HCT116 (cell line): ENCODE measurements at regions of chr15 and their contacts with region 1.

Region 1: GRCh38 chr15:85730001-85730820 is 64.5 kb downstream of the KLHL25 start:
- DNase-seq: peak; percentile 47
- ATAC-seq: peak; percentile 93
- H3K4me3 ChIP-seq: no peak overlapping the region
- H3K27ac ChIP-seq: no peak overlapping the region
- H3K4me1 ChIP-seq: no peaks in the 10 kb centered on the region
- H3K27me3 ChIP-seq: no peaks in the 10 kb centered on the region
- CTCF ChIP-seq: peak; percentile 61 to 81 (median 68)
- POLR2A ChIP-seq: no peak
- RAD21 ChIP-seq: peak; percentile 79

Region 2: GRCh38 chr15:85306946-85307708 is 423.1 kb before region 1 on chr15:
- CTCF ChIA-PET with region 1: no interaction called
- POLR2A ChIA-PET with region 1: no interaction called
- RAD21 ChIA-PET with region 1: no interaction called
- intact Hi-C with region 1: loop called (anchors 10 kb)
- DNase-seq: no peak
- ATAC-seq: no peak
- H3K4me3 ChIP-seq: no peak overlapping the region
- H3K27ac ChIP-seq: no peak overlapping the region
- H3K4me1 ChIP-seq: no peaks in the 10 kb centered on the region
- H3K27me3 ChIP-seq: no peaks in the 10 kb centered on the region
- CTCF ChIP-seq: no peak
- POLR2A ChIP-seq: no peak
- RAD21 ChIP-seq: no peak

Region 3: DNA sequence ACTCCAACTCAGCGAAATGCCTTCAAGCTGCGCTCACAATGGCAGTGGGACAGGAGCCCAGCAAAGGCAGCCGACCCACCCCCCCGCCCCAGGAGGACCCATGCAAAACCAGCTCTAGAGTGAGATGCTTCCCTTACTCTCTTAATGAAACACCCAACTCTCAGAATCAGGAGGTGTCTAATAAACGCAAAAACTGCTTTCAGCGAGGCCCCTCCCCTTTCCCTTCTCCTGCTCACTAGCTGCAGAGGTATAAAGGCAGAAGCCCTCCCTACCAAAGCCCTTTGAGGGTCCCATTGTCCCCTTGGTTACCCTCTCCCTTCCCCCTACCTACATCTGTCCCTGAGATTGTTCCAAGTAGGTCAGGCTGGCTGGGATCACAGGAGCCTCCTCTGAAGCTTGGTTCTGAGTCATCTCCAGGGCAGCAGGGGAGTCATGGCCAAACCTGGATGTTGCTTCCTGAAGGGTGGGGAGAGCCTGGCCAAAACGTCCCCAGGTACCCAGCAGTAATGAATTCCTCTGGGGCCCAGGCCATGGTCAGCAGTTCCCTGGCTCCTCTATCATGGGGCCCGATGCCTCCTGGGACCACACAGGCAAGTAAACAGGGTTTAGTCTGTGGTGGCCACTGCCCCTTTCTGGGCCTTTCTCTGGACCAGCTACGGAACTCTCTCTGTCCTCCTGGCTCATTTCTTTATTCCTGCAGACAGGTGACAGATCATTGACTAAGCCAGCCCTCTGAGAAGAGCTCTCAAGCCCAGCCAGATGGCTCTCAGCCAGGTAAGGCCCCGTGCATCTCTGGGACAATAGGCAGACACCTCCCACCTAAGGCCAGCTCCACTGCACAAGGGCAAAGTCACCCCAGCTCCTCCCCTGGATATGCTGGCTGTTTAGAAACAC is 55.9 kb after region 1 on chr15:
- CTCF ChIA-PET with region 1: no interaction called
- POLR2A ChIA-PET with region 1: no interaction called
- RAD21 ChIA-PET with region 1: no interaction called
- intact Hi-C with region 1: loop called (anchors 5 kb)
- DNase-seq: peak; percentile 53
- ATAC-seq: peak; percentile 92
- H3K4me3 ChIP-seq: peak overlapping the region; percentile 16 to 40
- H3K27ac ChIP-seq: peak overlapping the region; percentile 58
- H3K4me1 ChIP-seq: peaks cover 44 to 48% of the 10 kb centered on the region in 2 experiments
- H3K27me3 ChIP-seq: no peaks in the 10 kb centered on the region
- CTCF ChIP-seq: no peak
- POLR2A ChIP-seq: no peak
- RAD21 ChIP-seq: no peak

Region 4: GRCh38 chr15:85831415-85832113 is 101.4 kb after region 1 on chr15:
- CTCF ChIA-PET with region 1: interaction called, 4 read pairs
- POLR2A ChIA-PET with region 1: no interaction called
- RAD21 ChIA-PET with region 1: interaction called in 1 of 2 experiments, 3 read pairs
- intact Hi-C with region 1: loop called (anchors 1 kb)
- DNase-seq: peak; percentile 37
- ATAC-seq: peak; percentile 99
- H3K4me3 ChIP-seq: no peak overlapping the region
- H3K27ac ChIP-seq: no peak overlapping the region
- H3K4me1 ChIP-seq: no peaks in the 10 kb centered on the region
- H3K27me3 ChIP-seq: no peaks in the 10 kb centered on the region
- CTCF ChIP-seq: peak; percentile 70 to 87 (median 76)
- POLR2A ChIP-seq: no peak
- RAD21 ChIP-seq: peak; percentile 83

Region 5: GRCh38 chr15:85840065-85840801 is 110.0 kb after region 1 on chr15:
- CTCF ChIA-PET with region 1: interaction called, 14 read pairs
- POLR2A ChIA-PET with region 1: no interaction called
- RAD21 ChIA-PET with region 1: no interaction called
- intact Hi-C with region 1: loop called (anchors 1 kb)
- DNase-seq: peak; percentile 77
- ATAC-seq: peak; percentile 98
- H3K4me3 ChIP-seq: peak overlapping the region; percentile 24 to 52
- H3K27ac ChIP-seq: no peak overlapping the region
- H3K4me1 ChIP-seq: peaks cover 0 to 11% of the 10 kb centered on the region in 2 experiments; a peak in 3 of 4 replicates
- H3K27me3 ChIP-seq: 0 out of 2 replicates have a peak, but pooled peaks cover 3% of the 10 kb centered on the region
- CTCF ChIP-seq: peak; percentile 87 to 91 (median 87)
- POLR2A ChIP-seq: no peak
- RAD21 ChIP-seq: peak; percentile 88